T-cell (primary cell): ENCODE measurements at regions of chr22 and their contacts with region 1.

Region 1: GRCh38 chr22:40396882-40397281 is 26.5 kb downstream of the SGSM3 start:
- DNase-seq: no peak
- ATAC-seq: no peak
- H3K4me3 ChIP-seq: no peak overlapping the region
- H3K4me3 Mint-ChIP-seq: no peak overlapping the region
- H3K27ac ChIP-seq: no peak overlapping the region
- H3K27ac Mint-ChIP-seq: peak overlapping the region; percentile 79 to 81
- H3K4me1 ChIP-seq: peaks cover 41 to 58% of the 10 kb centered on the region in 2 experiments
- H3K4me1 Mint-ChIP-seq: peaks cover 81 to 90% (median 83%) of the 10 kb centered on the region in 3 donors
- H3K27me3 ChIP-seq: no peaks in the 10 kb centered on the region
- H3K27me3 Mint-ChIP-seq: no peaks in the 10 kb centered on the region

Region 2: DNA sequence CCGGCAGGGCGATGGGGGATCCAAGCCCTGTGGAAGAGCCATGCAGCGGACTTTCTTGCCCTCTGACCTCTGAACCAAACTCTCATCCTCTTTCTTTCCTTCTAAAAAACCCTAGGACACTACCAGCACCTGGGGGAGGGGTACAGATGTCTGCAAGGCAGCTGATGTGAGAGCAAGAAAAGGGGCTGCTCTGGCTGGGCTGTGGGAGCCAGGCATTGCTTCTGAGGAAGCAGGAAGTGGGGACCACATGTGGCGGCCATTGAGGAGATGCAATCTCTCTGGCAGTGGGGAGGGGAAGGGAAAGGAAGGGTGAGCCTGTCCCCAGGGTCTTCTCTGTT is 366.2 kb before region 1 on chr22:
- CTCF ChIA-PET with region 1: no interaction called
- POLR2A ChIA-PET with region 1: interaction called in 1 of 2 experiments, 12 read pairs
- DNase-seq: no peak
- ATAC-seq: peak in 2 of 4 experiments; percentile 26 to 44
- H3K4me3 ChIP-seq: no peak overlapping the region
- H3K4me3 Mint-ChIP-seq: no peak overlapping the region
- H3K27ac ChIP-seq: no peak overlapping the region
- H3K27ac Mint-ChIP-seq: no peak overlapping the region
- H3K4me1 ChIP-seq: peaks cover 0 to 9% of the 10 kb centered on the region in 2 experiments
- H3K4me1 Mint-ChIP-seq: peaks cover 4% of the 10 kb centered on the region in 3 donors
- H3K27me3 ChIP-seq: peaks cover 0 to 18% of the 10 kb centered on the region in 2 experiments
- H3K27me3 Mint-ChIP-seq: no peaks in the 10 kb centered on the region